ENCODE measurements at regions of chr20 and their contacts with region 1.

Region 1: DNA sequence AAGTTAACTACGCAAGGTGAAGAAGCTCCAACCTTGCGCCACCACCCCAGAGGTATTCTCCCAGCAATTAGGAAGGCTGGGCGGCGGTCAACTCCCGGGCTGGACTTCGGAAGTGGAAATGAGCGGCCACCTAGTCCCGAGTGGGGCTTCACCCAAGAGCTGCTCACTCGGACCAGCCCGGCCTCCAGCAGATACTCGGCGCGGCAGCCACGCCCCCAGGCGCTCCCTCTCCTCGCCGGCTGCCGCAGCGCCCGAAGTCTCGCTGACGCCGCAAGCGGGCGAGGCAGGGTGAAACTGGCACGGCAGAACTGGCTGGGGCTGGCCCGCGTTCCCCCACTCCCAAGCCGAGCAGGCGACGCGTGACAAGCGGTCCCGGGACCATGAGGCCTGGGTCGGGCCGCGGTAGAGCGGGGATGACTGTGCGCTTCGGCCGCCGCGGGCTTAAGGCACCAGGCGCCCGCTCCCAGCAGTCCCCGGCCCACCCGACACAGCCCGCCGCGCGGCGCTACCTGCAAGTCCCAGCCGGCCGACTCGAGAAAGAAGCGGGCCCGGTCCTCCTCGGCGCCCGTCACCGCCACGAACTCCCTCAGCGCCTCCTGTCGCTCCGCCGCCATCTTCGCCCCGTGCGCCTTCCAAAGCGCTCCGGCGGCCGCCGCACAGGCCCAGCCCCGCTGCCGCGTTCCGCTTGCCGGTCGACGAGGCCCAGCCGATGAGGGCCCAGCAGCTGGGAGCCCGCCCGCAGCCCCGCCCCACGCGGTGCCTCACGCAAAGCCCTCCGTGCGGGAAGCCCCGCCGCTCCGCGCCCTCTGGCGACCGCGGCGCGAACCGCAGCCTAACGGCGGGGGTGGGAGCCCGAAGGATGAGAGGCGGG is at the start of gene NSFL1C:
- DNase-seq: peak; percentile 96
- ATAC-seq: peak; percentile 97
- H3K4me3 Mint-ChIP-seq: peak within 1 kb of the TSS; percentile 81
- H3K27ac Mint-ChIP-seq: peak within 1 kb of the TSS; percentile 75
- H3K4me1 Mint-ChIP-seq: peaks cover 45% of the 10 kb centered on the region
- H3K27me3 Mint-ChIP-seq: peaks cover 17% of the 10 kb centered on the region
- total RNA-seq, gene NSFL1C: 60.5 to 67.8 TPM

Region 2: GRCh38 chr20:1266167-1266973 is 200.1 kb before region 1 on chr20 and contains the start of gene SNPH:
- CTCF ChIA-PET with region 1: no interaction called
- POLR2A ChIA-PET with region 1: no interaction called
- DNase-seq: peak; percentile 84
- ATAC-seq: peak; percentile 95
- H3K4me3 Mint-ChIP-seq: peak within 1 kb of the TSS; percentile 88
- H3K27ac Mint-ChIP-seq: peak within 1 kb of the TSS; percentile 93
- H3K4me1 Mint-ChIP-seq: peaks cover 38% of the 10 kb centered on the region
- H3K27me3 Mint-ChIP-seq: no peaks in the 10 kb centered on the region
- total RNA-seq, gene SNPH: 6.5 to 7.6 TPM

Region 3: GRCh38 chr20:1313236-1313964 is 153.0 kb before region 1 on chr20:
- CTCF ChIA-PET with region 1: interaction called, 12 read pairs
- POLR2A ChIA-PET with region 1: no interaction called
- DNase-seq: peak; percentile 66
- ATAC-seq: peak; percentile 62
- H3K4me3 Mint-ChIP-seq: no peak overlapping the region
- H3K27ac Mint-ChIP-seq: no peak overlapping the region
- H3K4me1 Mint-ChIP-seq: peaks cover 18% of the 10 kb centered on the region
- H3K27me3 Mint-ChIP-seq: peaks cover 6% of the 10 kb centered on the region

Region 4: GRCh38 chr20:1392823-1393506 is 73.5 kb before region 1 on chr20 and contains the start of gene FKBP1A:
- CTCF ChIA-PET with region 1: interaction called, 15 read pairs
- POLR2A ChIA-PET with region 1: interaction called, 9 read pairs
- DNase-seq: peak; percentile 93
- ATAC-seq: peak; percentile 84
- H3K4me3 Mint-ChIP-seq: peak within 1 kb of the TSS; percentile 88
- H3K27ac Mint-ChIP-seq: peak within 1 kb of the TSS; percentile 91
- H3K4me1 Mint-ChIP-seq: peaks cover 71% of the 10 kb centered on the region
- H3K27me3 Mint-ChIP-seq: peaks cover 18% of the 10 kb centered on the region
- total RNA-seq, gene FKBP1A: 288 to 291 TPM

Region 5: GRCh38 chr20:1450926-1451491 is 15.4 kb before region 1 on chr20:
- CTCF ChIA-PET with region 1: interaction called, 12 read pairs
- POLR2A ChIA-PET with region 1: interaction called, 5 read pairs
- DNase-seq: no peak
- ATAC-seq: no peak
- H3K4me3 Mint-ChIP-seq: no peak overlapping the region
- H3K27ac Mint-ChIP-seq: no peak overlapping the region
- H3K4me1 Mint-ChIP-seq: no peaks in the 10 kb centered on the region
- H3K27me3 Mint-ChIP-seq: no peaks in the 10 kb centered on the region